Panc1 (cell line): ENCODE measurements at regions of chr13 and their contacts with region 1.

Region 1: GRCh38 chr13:98429977-98430736 is 146.8 kb downstream of the STK24 start:
- DNase-seq: no peak
- ATAC-seq: no peak
- H3K4me3 ChIP-seq: no peak overlapping the region
- H3K27ac ChIP-seq: no peak overlapping the region
- H3K4me1 ChIP-seq: no peaks in the 10 kb centered on the region
- H3K27me3 ChIP-seq: no peaks in the 10 kb centered on the region
- CTCF ChIP-seq: no peak

Region 2: DNA sequence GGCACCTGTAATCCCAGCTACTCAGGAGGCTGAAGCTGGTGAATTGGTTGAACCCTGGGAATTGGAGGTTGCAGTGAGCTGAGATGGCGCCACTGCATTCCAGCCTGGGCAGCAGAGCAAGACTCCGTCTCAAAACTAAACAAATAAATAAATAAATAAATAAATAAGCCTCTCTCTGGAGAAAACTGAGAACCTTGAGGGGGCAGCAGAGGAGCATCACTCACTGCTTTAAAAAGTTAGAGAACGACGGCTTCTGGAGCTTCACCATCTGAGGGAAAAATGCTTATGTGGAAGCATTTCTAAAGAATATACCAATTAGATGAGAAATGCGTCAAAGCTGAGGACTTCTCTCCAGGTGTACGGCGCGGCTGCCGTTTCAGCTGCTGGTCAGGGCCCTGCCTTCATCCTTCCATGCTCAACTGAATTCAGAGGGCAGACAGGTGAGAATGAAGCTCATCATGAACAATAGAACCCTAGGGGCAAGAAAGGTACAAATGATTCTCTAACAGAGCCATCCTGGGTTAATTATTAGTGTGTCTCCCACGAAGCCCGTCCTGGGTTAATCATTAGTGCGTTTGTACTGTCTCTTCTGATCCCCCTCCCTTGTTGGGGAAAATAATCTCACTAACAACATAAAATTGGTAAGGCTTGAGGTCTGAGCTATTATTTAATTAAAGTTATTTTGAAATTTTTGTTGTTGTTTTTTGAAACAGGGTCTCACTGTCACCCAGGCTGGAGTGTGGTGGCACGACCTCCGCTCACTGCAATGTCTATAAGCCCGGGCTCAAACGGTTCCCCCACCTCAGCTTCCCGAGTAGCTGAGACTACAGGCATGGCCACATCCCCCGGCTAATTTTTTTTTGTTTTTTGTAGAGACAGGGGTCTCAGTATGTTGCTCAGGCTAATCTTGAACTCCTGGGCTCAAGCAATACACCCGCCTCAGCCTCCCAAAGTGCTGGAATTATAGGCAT is 396.6 kb before region 1 on chr13:
- CTCF ChIA-PET with region 1: no interaction called
- POLR2A ChIA-PET with region 1: no interaction called
- in situ Hi-C with region 1: no loop called
- intact Hi-C with region 1: loop called (anchors 10 kb)
- DNase-seq: no peak
- ATAC-seq: peak; percentile 68; the same call in 1 of the 2 replicates
- H3K4me3 ChIP-seq: no peak overlapping the region
- H3K27ac ChIP-seq: no peak overlapping the region
- H3K4me1 ChIP-seq: no peaks in the 10 kb centered on the region
- H3K27me3 ChIP-seq: no peaks in the 10 kb centered on the region
- CTCF ChIP-seq: peak; percentile 52

Region 3: DNA sequence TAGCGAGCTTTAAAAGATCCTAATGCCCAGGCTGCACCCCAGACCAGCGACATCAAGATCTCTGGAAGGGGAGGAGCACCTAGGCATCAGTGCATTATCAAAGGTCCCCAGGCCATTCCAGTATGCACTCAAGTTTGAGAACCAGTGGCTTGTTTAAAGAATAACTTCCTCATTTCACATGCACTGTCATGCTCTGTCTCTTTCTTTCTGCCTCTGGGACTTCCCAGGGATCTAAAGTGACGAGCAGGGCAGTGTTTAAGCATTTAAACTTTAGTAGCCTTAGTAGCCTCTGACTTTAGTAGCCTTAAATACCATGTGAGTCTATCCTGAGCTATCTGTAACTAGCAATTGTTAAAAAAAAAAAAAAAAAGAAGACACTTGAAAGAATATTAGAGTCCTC is 296.2 kb before region 1 on chr13:
- CTCF ChIA-PET with region 1: no interaction called
- POLR2A ChIA-PET with region 1: no interaction called
- in situ Hi-C with region 1: no loop called
- intact Hi-C with region 1: loop called (anchors 10 kb)
- DNase-seq: no peak
- ATAC-seq: no peak
- H3K4me3 ChIP-seq: no peak overlapping the region
- H3K27ac ChIP-seq: no peak overlapping the region
- H3K4me1 ChIP-seq: no peaks in the 10 kb centered on the region
- H3K27me3 ChIP-seq: no peaks in the 10 kb centered on the region; the same call in 1 of the 2 replicates
- CTCF ChIP-seq: no peak